Calu3 (cell line): ENCODE measurements at regions of chr17 and their contacts with region 1.

Region 1: GRCh38 chr17:40287494-40288369 is at the start of gene CDC6:
- DNase-seq: peak; percentile 100
- H3K4me3 Mint-ChIP-seq: peak within 1 kb of the TSS; percentile 83
- H3K27ac Mint-ChIP-seq: peak within 1 kb of the TSS; percentile 90
- H3K4me1 Mint-ChIP-seq: peaks cover 71% of the 10 kb centered on the region
- H3K27me3 Mint-ChIP-seq: no peaks in the 10 kb centered on the region
- CTCF ChIP-seq: no peak
- total RNA-seq, gene CDC6: 567 and 645 TPM in 2 replicates

Region 2: DNA sequence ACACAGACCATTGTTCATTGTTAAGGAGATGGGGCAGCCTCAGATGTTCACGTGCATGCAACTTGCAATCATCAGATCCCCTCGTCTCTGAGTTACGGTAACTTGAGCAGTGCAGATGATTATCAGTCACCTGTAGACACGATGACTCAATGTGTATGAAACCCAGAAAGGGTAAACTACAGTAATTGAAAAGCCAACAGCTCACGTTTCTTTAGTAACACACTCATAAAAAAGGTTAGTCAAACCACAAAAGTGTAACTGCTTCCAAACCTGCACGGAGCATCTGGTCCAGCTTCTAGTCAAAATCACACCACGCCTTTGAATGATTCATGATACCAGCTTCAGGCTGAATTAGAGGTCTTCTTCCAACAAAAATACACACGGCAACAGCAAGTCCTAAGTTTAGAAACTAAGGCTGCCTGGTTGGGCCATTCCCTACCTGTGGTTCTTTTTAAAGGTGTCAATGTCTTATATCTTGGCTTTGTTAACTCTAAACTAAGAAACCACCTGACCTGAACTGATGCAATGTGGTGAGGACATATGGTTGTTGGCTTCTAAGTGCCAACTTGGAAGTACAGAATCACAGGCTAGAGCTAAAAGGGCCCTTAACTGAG is 517.7 kb before region 1 on chr17:
- CTCF ChIA-PET with region 1: interaction called, 5 read pairs
- intact Hi-C with region 1: loop called (anchors 10 kb)
- DNase-seq: peak; percentile 100
- H3K4me3 Mint-ChIP-seq: peak overlapping the region; percentile 10
- H3K27ac Mint-ChIP-seq: peak overlapping the region; percentile 60
- H3K4me1 Mint-ChIP-seq: peaks cover 72% of the 10 kb centered on the region
- H3K27me3 Mint-ChIP-seq: peaks cover 13% of the 10 kb centered on the region
- CTCF ChIP-seq: no peak

Region 3: DNA sequence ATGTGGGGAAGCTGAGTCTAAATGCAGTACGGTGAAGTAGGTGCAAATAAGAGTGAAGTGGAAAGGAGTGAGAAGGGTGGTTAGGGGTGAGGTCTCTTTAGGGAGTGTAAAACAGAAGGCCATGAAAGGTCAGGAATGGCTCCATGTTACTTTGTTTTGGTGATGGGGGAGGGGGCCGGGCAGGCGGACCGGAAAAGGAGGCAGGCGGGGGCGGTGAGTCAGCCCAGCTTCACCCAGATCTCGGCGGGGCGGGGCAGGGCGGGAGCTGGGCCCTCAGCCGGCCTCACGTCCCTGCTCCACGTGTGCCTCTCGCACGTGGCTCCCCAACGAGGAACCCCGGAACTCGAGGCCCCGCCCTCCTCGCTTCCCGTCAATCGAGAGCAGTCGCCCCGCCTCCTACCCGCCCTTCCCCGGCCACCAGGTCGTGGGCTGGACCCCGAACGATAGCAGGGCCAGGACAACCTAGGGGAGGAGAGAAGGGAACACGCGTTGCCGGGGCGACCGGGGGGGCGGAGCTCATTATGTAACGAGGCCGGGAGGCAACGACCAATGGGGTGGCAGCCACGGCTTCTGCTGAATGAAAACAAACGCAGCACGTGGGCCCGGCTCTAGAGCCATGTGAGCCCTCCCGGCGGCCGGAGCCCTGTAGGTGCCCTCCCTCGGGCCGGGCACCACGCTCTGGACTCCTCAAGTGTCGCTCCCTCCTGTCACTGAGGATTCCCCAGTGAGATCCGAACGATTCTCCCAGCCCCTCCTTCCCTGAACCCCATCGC is 188.7 kb before region 1 on chr17:
- CTCF ChIA-PET with region 1: interaction called, 23 read pairs
- intact Hi-C with region 1: no loop called
- DNase-seq: peak; percentile 100
- H3K4me3 Mint-ChIP-seq: peak overlapping the region; percentile 80
- H3K27ac Mint-ChIP-seq: peak overlapping the region; percentile 85
- H3K4me1 Mint-ChIP-seq: peaks cover 73% of the 10 kb centered on the region
- H3K27me3 Mint-ChIP-seq: no peaks in the 10 kb centered on the region
- CTCF ChIP-seq: no peak

Region 4: GRCh38 chr17:40177275-40177874 is 110.4 kb before region 1 on chr17 and contains the start of gene RAPGEFL1:
- CTCF ChIA-PET with region 1: interaction called, 15 read pairs
- intact Hi-C with region 1: no loop called
- DNase-seq: peak; percentile 100
- H3K4me3 Mint-ChIP-seq: peak within 1 kb of the TSS; percentile 76
- H3K27ac Mint-ChIP-seq: peak within 1 kb of the TSS; percentile 61
- H3K4me1 Mint-ChIP-seq: peaks cover 51% of the 10 kb centered on the region
- H3K27me3 Mint-ChIP-seq: no peaks in the 10 kb centered on the region
- CTCF ChIP-seq: no peak
- total RNA-seq, gene RAPGEFL1: 57.9 and 86.3 TPM in 2 replicates

Region 5: DNA sequence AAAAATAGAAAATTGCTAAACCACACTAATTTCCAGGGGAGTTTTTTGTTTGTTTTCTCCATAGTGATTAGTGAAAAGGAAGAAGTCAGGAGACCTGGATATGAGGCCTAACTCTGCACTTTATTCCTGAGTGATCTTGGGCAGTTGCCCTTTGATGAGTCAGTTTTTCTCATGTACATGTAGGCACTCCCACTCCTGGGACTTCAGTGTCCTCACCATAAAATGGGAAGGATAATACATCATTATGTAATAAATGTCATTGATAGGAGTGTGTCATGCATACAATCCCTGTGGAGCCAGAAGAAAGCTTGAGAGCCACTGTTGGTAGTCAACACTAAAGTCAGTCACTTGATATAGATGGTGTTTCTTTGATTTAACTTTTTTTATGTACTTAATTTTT is 36.2 kb before region 1 on chr17:
- CTCF ChIA-PET with region 1: interaction called, 15 read pairs
- intact Hi-C with region 1: loop called (anchors 2 kb)
- DNase-seq: no peak
- H3K4me3 Mint-ChIP-seq: no peak overlapping the region
- H3K27ac Mint-ChIP-seq: peak overlapping the region; percentile 10
- H3K4me1 Mint-ChIP-seq: peaks cover 30% of the 10 kb centered on the region
- H3K27me3 Mint-ChIP-seq: no peaks in the 10 kb centered on the region
- CTCF ChIP-seq: no peak

Region 6: DNA sequence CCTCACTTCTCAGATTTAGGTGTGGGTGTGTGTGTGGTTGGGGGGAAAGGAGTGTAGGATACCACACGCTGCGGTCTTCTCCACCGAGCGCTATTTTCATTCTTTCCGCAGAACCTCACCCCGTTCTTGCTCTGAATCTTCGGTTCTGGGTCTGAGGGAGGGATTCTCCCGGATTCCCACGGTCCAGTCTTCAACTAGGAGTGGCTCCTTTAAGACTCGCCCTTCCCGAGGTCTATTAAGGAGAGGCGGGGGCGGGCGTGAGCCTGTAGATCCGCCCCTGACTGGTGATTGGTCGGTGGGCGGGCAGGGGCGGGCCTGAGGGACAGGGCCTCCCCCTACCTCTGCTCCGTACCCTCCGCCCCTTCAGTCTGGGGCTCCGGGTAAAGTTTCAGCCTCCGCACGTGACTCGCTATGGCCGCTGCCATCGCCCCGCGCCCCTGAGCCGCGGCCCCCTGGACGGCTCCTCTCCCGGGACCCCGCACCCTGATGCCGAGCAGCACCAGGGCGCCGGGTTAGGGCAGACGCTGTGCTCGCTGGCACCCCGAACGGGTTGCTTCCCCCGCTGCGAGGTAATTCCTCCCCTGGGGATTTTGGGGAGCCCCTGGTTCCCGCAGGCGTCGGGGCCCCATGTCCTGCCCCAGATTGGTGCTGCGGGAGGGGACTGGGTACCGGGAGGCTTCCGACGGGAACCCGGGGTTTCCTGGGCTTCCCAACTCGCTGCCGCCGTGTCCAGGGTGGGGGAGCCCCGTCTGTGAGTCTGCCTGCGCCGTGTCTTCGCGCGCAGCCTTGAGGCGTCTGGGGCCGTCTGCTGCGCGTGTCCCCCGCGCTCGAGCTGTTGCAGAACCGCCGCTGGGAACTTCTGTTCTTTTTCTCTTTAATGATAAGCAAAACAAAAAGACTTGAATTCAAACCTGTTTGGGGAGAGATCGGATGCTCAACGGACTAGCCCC is 30.4 kb after region 1 on chr17:
- CTCF ChIA-PET with region 1: interaction called, 56 read pairs
- intact Hi-C with region 1: no loop called
- DNase-seq: peak; percentile 100
- H3K4me3 Mint-ChIP-seq: peak overlapping the region; percentile 89
- H3K27ac Mint-ChIP-seq: peak overlapping the region; percentile 71
- H3K4me1 Mint-ChIP-seq: peaks cover 45% of the 10 kb centered on the region
- H3K27me3 Mint-ChIP-seq: no peaks in the 10 kb centered on the region
- CTCF ChIP-seq: no peak